ENCODE measurements at regions of chr9 and their contacts with region 1.

Region 1: GRCh38 chr9:98118640-98119601 is at the start of gene TRIM14:
- DNase-seq: peak; percentile 60
- H3K4me3 Mint-ChIP-seq: peak within 1 kb of the TSS; percentile 81
- H3K27ac Mint-ChIP-seq: peak within 1 kb of the TSS; percentile 92
- H3K4me1 Mint-ChIP-seq: peaks cover 44% of the 10 kb centered on the region
- H3K27me3 Mint-ChIP-seq: no peaks in the 10 kb centered on the region
- total RNA-seq, gene TRIM14: 49.6 to 55.0 TPM

Region 2: DNA sequence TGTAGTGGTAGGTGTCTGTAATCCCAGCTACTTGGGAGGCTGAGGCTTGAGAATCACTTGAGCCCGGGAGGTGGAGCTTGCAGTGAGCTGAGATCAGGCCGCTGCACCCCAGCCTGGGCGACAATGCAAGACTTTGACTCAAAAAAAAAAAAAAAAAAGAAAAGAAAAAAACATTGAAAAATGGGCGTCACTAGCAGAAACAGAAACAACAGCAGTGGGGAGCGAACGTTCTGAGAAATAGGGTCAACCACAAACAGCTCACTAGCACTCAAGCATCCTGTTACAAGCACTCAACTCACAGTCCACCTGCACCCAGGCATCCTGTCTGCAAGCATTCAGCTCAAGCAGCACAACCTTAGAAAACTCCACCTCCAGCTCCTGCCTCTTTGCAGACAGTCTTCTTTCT is 17.1 kb before region 1 on chr9:
- CTCF ChIA-PET with region 1: interaction called, 12 read pairs
- intact Hi-C with region 1: loop called (anchors 1 kb)
- DNase-seq: peak; percentile 90
- H3K4me3 Mint-ChIP-seq: peak overlapping the region; percentile 65
- H3K27ac Mint-ChIP-seq: peak overlapping the region; percentile 96
- H3K4me1 Mint-ChIP-seq: peaks cover 83% of the 10 kb centered on the region
- H3K27me3 Mint-ChIP-seq: no peaks in the 10 kb centered on the region

Region 3: GRCh38 chr9:98108531-98109031 is 10.3 kb before region 1 on chr9:
- CTCF ChIA-PET with region 1: interaction called, 6 read pairs
- intact Hi-C with region 1: loop called (anchors 1 kb)
- DNase-seq: peak; percentile 57
- H3K4me3 Mint-ChIP-seq: peak overlapping the region; percentile 53
- H3K27ac Mint-ChIP-seq: peak overlapping the region; percentile 94
- H3K4me1 Mint-ChIP-seq: peaks cover 72% of the 10 kb centered on the region
- H3K27me3 Mint-ChIP-seq: no peaks in the 10 kb centered on the region

Region 4: DNA sequence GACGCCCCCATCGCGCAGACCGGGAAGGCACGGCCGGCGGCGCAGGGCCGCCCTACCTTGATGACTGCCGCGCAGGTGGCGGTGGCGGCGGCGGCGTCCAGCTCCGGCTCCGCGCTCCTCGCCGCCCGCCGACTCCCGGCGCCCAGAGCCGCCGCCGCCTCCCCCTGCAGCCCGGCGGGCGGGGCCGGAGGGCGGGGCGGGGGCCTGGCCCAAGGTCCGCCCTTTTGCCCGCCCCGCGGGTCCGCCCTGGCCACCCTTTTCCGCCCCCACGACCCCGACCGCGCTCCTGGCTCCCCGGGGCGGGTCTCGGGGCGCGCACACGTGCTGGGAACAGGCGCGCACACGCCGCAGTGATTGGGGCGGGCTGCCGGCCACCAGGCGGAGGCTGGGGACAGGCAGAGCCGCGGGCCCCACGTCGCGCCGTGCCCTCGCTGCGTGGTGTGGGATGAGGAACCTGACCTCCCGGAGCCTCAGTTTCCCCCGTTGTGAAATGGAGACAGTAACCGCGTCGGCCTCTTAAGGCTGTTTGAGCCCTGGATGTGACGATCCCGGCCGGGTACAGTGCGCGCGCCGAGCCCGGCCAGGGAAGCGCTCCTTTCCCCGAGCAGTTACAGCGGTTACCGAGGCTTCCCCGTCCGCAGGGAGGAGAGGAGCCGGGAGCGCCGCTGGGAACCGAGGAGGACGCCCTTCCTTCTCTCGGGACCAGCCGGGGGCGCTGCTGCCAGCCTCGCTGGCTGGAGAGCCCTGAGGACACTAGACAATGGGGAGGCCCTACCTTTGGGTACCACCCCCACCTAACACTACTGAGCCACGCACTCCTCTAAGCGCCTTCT is 73.8 kb after region 1 on chr9 and contains the start of gene CORO2A:
- CTCF ChIA-PET with region 1: interaction called, 3 read pairs
- intact Hi-C with region 1: loop called (anchors 1 kb)
- DNase-seq: peak; percentile 64
- H3K4me3 Mint-ChIP-seq: peak within 1 kb of the TSS; percentile 82
- H3K27ac Mint-ChIP-seq: peak within 1 kb of the TSS; percentile 56
- H3K4me1 Mint-ChIP-seq: peaks cover 27% of the 10 kb centered on the region
- H3K27me3 Mint-ChIP-seq: no peaks in the 10 kb centered on the region
- total RNA-seq, gene CORO2A: 8.1 to 8.2 TPM

Region 5: GRCh38 chr9:98207606-98208005 is 88.7 kb after region 1 on chr9:
- CTCF ChIA-PET with region 1: interaction called, 5 read pairs
- intact Hi-C with region 1: loop called (anchors 1 kb)
- DNase-seq: no peak
- H3K4me3 Mint-ChIP-seq: no peak overlapping the region
- H3K27ac Mint-ChIP-seq: no peak overlapping the region
- H3K4me1 Mint-ChIP-seq: peaks cover 2% of the 10 kb centered on the region
- H3K27me3 Mint-ChIP-seq: no peaks in the 10 kb centered on the region

Region 6: GRCh38 chr9:98263482-98264357 is 144.8 kb after region 1 on chr9:
- CTCF ChIA-PET with region 1: interaction called, 3 read pairs
- intact Hi-C with region 1: loop called (anchors 1 kb)
- DNase-seq: peak; percentile 93
- H3K4me3 Mint-ChIP-seq: no peak overlapping the region
- H3K27ac Mint-ChIP-seq: no peak overlapping the region
- H3K4me1 Mint-ChIP-seq: no peaks in the 10 kb centered on the region
- H3K27me3 Mint-ChIP-seq: no peaks in the 10 kb centered on the region

Region 7: DNA sequence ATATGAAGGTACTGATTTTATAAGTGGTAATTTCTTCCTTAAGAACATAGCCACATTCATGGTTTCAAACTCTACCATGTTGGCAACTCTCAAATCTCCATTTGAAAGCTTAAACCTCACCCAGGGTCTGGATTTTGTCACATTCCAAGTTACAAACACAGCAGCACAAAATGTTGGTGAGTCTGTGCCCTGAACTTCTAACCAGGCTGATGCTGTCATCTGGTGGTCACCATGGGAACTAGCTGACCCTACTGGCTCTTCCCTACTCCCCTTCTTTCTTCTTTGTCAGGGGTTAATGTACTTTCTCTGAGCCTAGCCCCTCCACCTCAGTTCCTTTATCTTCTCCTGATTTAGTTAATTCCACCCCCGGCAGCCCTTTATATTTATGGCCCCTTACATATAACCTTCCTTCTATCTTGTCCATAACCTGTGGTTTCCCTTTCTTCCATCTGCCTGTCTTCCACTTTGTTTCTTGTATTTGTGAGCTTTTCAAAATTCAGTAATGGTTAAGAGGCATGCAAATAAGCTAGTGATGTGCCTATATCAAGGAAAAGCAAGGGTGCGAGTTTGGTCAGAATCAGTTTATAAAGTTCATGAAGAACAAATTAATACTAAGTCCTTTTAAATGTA is 1021.9 kb after region 1 on chr9:
- CTCF ChIA-PET with region 1: no interaction called
- intact Hi-C with region 1: no loop called
- DNase-seq: peak; percentile 67
- H3K4me3 Mint-ChIP-seq: no peak overlapping the region
- H3K27ac Mint-ChIP-seq: no peak overlapping the region
- H3K4me1 Mint-ChIP-seq: peaks cover 29% of the 10 kb centered on the region
- H3K27me3 Mint-ChIP-seq: no peaks in the 10 kb centered on the region